ENCODE measurements at regions of chr4 and their contacts with region 1.

Region 1: DNA sequence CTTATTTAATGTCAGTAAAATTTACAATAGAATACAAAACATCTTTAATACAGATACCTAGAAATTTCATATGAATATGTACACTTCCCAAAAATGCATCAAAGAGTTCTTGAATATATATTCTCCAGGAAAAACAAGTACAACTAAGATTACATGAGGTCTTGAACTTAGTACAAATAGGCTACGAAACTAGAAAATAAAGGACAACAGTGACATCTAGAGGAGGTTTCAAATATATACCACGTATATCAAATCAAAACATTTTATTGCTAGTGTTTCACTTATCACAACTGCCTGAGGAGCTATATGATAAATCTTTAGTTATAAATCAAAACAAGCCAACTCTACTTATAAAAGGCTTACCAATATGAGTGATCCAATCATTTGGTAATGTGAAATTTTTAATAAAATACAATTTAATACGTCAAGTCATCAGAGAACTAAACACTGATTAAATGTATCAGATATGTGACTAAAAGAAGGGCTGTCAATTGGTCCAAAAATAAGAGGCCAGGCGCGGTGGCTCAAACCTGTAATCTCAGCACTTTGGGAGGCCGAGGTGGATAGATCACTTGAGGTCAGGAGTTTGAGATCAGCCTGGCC is 36.6 kb downstream of the ANAPC10 start:
- DNase-seq: no peak
- ATAC-seq: peak in 2 of 4 donors; percentile 49 to 59
- H3K4me3 ChIP-seq: no peak overlapping the region
- H3K27ac ChIP-seq: no peak overlapping the region
- H3K4me1 ChIP-seq: peaks cover 0 to 8% (median 0%) of the 10 kb centered on the region in 12 donors
- H3K27me3 ChIP-seq: no peaks in the 10 kb centered on the region
- CTCF ChIP-seq: peak; percentile 34 to 66 (median 52)
- POLR2A ChIP-seq: no peak

Region 2: GRCh38 chr4:144787365-144788258 is 273.8 kb before region 1 on chr4:
- intact Hi-C with region 1: loop called in 1 of 10 experiments (anchors 5 kb)
- DNase-seq: no peak
- ATAC-seq: no peak
- H3K4me3 ChIP-seq: no peak overlapping the region
- H3K27ac ChIP-seq: no peak overlapping the region
- H3K4me1 ChIP-seq: no peaks in the 10 kb centered on the region
- H3K27me3 ChIP-seq: no peaks in the 10 kb centered on the region
- CTCF ChIP-seq: peak; percentile 20 to 62 (median 47)
- POLR2A ChIP-seq: no peak